Spleen (tissue), 13 donors: ENCODE measurements at regions of chr7 and their contacts with region 1.

Region 1: GRCh38 chr7:134992626-134993179 is 6.4 kb downstream of the AGBL3 start:
- DNase-seq: no peak
- H3K4me3 ChIP-seq: no peak overlapping the region
- H3K27ac ChIP-seq: peak overlapping the region in 7 of 8 donors; percentile 39 to 69 (median 56)
- H3K4me1 ChIP-seq: peaks cover 14 to 77% (median 38%) of the 10 kb centered on the region in 6 donors
- H3K27me3 ChIP-seq: no peaks in the 10 kb centered on the region
- CTCF ChIP-seq: no peak
- POLR2A ChIP-seq: no peak

Region 2: DNA sequence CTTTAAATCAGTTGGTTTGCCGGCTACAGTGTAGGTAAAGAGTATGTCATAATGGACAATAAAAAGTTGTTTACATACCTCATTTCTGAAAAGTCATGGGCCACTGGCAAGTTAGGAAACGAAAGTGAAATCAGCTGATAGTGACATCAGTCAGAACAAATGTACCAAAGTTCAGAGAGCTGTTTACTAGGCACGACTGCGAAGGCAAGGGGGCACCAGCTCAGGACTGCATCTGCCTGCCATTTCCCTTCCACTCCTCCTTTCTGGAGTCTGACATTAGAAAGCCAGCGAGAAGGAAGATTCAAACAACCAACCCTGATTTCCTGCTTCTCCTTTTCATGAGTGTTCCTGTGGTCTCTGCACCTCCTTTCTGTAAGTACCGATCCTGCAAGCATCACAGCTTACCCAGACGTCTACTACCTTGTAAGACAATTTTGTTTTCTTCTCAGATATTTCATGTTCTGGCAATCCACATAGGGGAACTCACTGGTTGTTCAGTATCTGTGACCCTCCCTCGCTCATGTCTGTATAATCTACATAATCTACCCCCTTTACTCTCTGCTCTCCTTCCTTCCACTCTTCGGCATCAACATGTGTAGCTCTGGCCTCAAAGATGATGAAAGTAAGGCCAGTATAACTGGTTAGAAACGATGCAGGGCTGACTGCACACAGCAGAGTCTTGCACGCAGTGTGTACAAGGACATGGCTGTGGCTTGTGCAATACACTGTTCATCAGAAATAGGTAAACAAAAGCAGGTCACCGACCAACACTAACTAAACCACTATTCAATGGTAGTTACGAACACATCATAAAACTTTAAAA is 155.4 kb after region 1 on chr7 and contains the start of gene TMEM140:
- intact Hi-C with region 1: loop called (anchors 10 kb)
- DNase-seq: peak; percentile 86
- H3K4me3 ChIP-seq: peak within 1 kb of the TSS; percentile 39 to 77 (median 52)
- H3K27ac ChIP-seq: peak within 1 kb of the TSS; percentile 66 to 99 (median 96)
- H3K4me1 ChIP-seq: peaks cover 42 to 89% (median 70%) of the 10 kb centered on the region in 6 donors
- H3K27me3 ChIP-seq: no peaks in the 10 kb centered on the region
- CTCF ChIP-seq: peak in 2 of 11 experiments; percentile 22 to 30
- POLR2A ChIP-seq: peak; percentile 63 to 96 (median 81)
- total RNA-seq, gene TMEM140: 40.3 to 76.1 (median 45.4) TPM